Activated T-helper 1 cell treated with anti-CD3 and anti-CD28 coated beads, Interleukin-12 subunit alpha, Interleukin-12 subunit beta, Interleukin-2, Interleukin-4 antibody, amounts not matched to agents 30 ng/mL and 10 ng/mL and 1 ng/mL, durations not matched to agents 14 hours and 24 hours and 36 hours (primary cell): ENCODE measurements at regions of chr14 and their contacts with region 1.

Region 1: DNA sequence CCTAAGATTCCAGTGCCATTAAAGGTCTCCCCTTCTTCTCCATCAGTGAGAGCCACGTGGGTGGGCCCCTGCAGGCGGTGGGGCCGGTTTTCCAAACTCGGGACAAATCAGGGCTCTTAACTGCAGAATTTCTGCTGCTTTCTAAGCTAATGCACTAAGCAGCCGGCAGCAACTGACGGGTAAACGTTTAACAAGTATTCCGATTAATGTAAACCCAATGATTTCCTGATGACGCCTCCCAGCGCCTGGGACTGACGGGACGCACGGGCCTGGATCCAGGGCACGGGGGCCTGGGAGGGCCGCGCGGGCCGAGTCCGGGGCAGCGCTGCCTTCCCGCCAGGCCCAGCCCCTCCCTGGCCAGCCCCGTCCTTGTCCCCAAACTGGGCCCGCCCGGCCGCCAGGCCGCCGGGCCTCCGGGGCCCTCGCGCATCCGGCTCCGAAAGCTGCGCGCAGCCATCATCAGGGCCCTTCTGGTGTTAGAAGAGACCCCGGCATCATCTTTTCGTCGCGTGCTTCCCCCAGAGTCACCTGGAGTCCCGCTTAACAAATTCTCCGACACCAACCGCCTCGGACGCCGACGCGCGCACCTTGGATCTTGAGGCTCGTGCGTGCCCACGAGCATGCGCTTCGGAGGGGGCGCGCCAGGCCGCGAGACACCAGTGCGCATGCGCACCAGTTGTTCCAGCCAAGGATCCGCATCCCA is at the start of gene MLH3:
- DNase-seq: peak; percentile 75
- H3K4me3 Mint-ChIP-seq: peak within 1 kb of the TSS; percentile 90
- H3K27ac Mint-ChIP-seq: peak within 1 kb of the TSS; percentile 92
- H3K4me1 Mint-ChIP-seq: peaks cover 60% of the 10 kb centered on the region
- H3K27me3 Mint-ChIP-seq: no peaks in the 10 kb centered on the region
- total RNA-seq, gene MLH3: 24.3 and 28.3 TPM in 2 replicates

Region 2: GRCh38 chr14:75063407-75064213 is 12.6 kb after region 1 on chr14 and contains the start of gene ACYP1:
- intact Hi-C with region 1: loop called (anchors 1 kb)
- DNase-seq: peak; percentile 89
- H3K4me3 Mint-ChIP-seq: peak within 1 kb of the TSS; percentile 99
- H3K27ac Mint-ChIP-seq: peak within 1 kb of the TSS; percentile 96
- H3K4me1 Mint-ChIP-seq: peaks cover 31% of the 10 kb centered on the region
- H3K27me3 Mint-ChIP-seq: no peaks in the 10 kb centered on the region
- total RNA-seq, gene ACYP1: 37.9 and 43.0 TPM in 2 replicates

Region 3: GRCh38 chr14:75069045-75069810 is 18.2 kb after region 1 on chr14 and contains the start of gene ZC2HC1C:
- intact Hi-C with region 1: loop called (anchors 1 kb)
- DNase-seq: peak; percentile 65
- H3K4me3 Mint-ChIP-seq: no peak within 1 kb of the TSS
- H3K27ac Mint-ChIP-seq: peak within 1 kb of the TSS; percentile 66
- H3K4me1 Mint-ChIP-seq: peaks cover 5% of the 10 kb centered on the region
- H3K27me3 Mint-ChIP-seq: no peaks in the 10 kb centered on the region
- total RNA-seq, gene ZC2HC1C: 0.71 and 0.80 TPM in 2 replicates